ENCODE measurements at regions of chr14 and their contacts with region 1.

Region 1: GRCh38 chr14:91038438-91038837 is 22.0 kb downstream of the RPS6KA5 start:
- DNase-seq: no peak
- H3K4me3 ChIP-seq: no peak overlapping the region
- CTCF ChIP-seq: no peak

Region 2: DNA sequence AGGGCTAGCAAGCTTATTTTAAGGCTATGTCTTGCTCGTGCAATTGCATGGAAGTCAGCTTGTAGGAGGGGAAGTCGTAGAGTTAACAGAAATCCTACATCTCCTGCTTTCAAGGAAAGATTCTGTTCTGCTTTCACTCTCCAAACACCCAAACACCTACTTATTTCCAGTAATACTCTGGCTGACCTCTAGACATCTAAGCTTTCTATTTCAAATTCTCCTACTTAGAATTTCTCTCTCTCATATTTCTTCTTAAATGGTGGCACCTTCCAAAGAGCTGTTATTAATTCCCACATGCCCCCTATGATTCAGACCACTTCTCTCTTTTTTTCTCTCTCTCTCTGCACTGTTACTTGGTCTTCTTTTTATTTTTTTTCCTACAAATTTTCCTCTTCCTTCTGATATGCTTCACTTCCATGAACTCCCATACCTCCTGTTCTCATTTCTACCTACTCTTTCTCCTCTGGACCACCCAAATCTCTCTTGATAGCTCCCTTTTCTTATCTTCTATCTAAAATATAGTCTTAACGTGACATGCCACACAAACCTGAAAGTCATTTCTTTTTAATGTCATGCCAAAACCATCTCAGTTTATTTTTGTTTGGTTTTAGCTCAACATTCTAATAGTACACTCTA is 68.8 kb before region 1 on chr14:
- in situ Hi-C with region 1: loop called (anchors 5 kb)
- DNase-seq: no peak
- H3K4me3 ChIP-seq: no peak overlapping the region
- CTCF ChIP-seq: no peak

Region 3: GRCh38 chr14:91004987-91005386 is 33.5 kb before region 1 on chr14:
- in situ Hi-C with region 1: loop called (anchors 5 kb)
- DNase-seq: no peak
- H3K4me3 ChIP-seq: no peak overlapping the region
- CTCF ChIP-seq: no peak

Region 4: GRCh38 chr14:91089958-91090535 is 51.6 kb after region 1 on chr14:
- in situ Hi-C with region 1: no loop called
- DNase-seq: no peak
- H3K4me3 ChIP-seq: no peak overlapping the region
- CTCF ChIP-seq: no peak